AG04450 (cell line): ENCODE measurements at regions of chr12 and their contacts with region 1.

Region 1: DNA sequence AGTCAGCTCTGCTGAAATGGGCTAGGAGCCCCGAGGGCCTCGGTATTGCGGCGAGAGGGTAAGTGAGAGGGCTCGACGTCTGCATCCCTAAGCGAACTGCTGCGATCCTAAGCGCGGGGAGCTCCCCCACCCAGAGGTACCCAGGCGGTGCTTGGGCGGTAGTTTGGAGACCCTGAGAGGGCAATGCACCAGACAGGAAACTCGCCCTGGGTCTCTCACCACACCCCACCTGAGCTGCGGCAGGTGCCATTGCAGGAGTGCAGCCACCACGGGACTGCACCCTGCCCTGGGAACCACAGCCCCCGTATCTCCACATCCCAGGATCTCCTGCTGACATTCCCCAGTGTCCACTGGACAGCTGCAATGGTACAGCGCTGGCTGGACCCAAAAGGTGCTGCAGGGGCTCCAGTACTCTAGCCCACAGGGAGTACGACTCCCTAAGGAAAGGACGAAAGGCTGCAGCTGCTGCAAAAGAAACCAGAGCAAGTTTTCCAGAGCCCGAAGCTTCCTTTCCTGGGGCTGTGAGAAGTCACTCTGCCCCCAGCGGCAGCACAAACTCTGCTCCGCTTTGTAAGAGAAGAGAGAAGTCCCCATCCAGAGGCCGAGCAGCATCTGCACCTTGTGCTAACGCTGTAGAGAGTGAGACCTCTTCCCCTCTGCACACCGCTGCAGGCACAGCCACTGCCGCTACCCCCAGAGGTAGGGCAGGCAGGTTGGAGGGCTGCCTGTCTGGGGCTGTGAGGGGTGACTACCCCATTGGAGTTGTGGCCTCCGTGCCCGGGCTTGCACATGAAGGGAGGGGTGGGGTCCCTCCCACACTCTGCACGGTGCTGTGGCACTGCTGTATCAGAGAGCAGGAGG is 31.1 kb upstream of the MON2 start:
- DNase-seq: peak; percentile 49
- H3K4me3 ChIP-seq: peak overlapping the region; percentile 61
- H3K27ac ChIP-seq: no peak overlapping the region
- H3K27me3 ChIP-seq: peaks cover 26% of the 10 kb centered on the region
- CTCF ChIP-seq: peak; percentile 75

Region 2: DNA sequence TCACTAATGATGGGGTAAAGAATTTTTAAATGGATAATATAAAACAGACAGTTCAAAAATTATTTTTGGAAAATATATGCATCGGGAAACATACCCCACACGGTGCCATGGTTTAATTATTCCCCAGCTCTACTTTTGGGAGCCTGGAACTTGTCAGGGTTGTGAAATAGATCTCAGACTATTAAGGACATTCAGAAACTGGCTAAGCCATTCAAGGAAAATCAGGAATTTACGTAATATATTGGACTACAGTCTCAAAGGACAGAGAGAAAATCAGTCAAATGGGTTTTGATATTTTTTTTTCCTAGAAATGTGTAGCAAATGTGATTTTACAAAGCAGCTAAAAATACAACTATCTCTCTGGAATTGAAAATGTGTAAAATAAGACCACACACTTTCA is 26.5 kb before region 1 on chr12:
- CTCF ChIA-PET with region 1: interaction called, 63 read pairs
- POLR2A ChIA-PET with region 1: no interaction called
- DNase-seq: no peak
- H3K4me3 ChIP-seq: no peak overlapping the region
- H3K27ac ChIP-seq: no peak overlapping the region
- H3K27me3 ChIP-seq: no peaks in the 10 kb centered on the region
- CTCF ChIP-seq: no peak

Region 3: DNA sequence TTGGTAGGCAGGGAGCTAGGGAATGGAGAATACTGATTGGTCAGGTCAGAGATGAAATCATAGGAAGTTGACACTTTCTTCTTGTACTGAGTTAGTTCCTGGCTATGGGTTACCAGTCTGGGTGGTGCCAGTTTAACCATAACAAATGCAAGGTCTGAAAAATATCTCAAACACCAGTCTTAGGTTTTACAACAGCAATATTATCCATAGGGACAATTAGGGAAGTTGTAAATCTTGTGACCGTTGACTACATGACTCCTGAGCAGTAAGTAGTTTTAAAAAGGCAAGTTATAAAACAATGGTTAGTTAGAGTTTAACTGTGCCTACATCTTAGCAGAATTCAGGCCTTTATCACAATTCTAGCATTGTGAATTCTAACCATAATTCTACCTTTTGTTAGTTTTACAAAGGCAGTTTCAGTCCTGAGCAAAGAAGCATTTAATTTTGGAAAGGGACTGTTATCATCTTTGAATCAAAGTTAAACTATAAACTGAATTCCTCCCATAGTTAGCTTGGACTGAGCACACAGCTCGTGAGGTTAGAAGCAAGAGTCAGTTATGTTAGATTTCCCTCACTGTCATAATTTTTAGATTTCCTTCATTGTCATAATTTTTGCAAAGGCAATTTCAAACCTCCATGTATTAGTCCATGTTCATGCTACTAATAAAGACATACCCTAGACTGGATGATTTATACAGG is 11.4 kb after region 1 on chr12:
- CTCF ChIA-PET with region 1: interaction called, 23 read pairs
- POLR2A ChIA-PET with region 1: no interaction called
- DNase-seq: no peak
- H3K4me3 ChIP-seq: no peak overlapping the region
- H3K27ac ChIP-seq: no peak overlapping the region
- H3K27me3 ChIP-seq: peaks cover 2% of the 10 kb centered on the region
- CTCF ChIP-seq: no peak

Region 4: GRCh38 chr12:62537551-62537950 is 102.0 kb after region 1 on chr12:
- CTCF ChIA-PET with region 1: interaction called, 10 read pairs
- POLR2A ChIA-PET with region 1: no interaction called
- DNase-seq: peak; percentile 20
- H3K4me3 ChIP-seq: no peak overlapping the region
- H3K27ac ChIP-seq: no peak overlapping the region
- H3K27me3 ChIP-seq: no peaks in the 10 kb centered on the region
- CTCF ChIP-seq: no peak

Region 5: DNA sequence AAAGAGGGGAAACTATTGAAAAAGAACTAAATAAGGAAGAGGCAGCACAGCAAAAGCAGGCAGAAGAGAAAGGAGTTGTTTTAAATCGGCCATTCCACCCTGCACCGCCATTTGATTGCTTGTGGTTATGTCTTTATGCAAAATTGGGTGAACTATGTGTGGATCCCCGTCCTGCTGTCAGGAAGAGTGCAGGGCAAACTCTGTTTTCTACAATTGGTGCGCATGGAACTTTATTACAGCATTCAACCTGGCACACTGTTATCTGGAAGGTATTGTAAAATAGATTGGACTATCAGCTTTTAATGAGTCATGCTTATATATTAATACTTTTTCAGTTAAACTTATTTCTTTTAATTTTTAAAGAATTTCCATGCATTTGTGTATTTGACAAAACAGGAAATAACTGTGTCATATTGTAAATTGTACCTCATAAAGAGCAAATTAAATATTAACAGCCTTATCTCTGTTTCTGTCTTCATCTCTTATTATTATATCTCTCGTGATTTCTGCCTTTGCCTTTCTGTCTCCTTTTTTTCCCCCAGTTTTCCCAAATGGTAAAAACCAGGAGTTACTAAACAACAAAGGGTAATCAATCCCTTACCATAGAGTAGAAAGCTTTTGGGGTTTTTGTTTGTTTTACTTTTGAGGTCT is 117.5 kb after region 1 on chr12:
- CTCF ChIA-PET with region 1: interaction called, 12 read pairs
- POLR2A ChIA-PET with region 1: no interaction called
- DNase-seq: no peak
- H3K4me3 ChIP-seq: no peak overlapping the region
- H3K27ac ChIP-seq: no peak overlapping the region
- H3K27me3 ChIP-seq: no peaks in the 10 kb centered on the region
- CTCF ChIP-seq: no peak

Region 6: DNA sequence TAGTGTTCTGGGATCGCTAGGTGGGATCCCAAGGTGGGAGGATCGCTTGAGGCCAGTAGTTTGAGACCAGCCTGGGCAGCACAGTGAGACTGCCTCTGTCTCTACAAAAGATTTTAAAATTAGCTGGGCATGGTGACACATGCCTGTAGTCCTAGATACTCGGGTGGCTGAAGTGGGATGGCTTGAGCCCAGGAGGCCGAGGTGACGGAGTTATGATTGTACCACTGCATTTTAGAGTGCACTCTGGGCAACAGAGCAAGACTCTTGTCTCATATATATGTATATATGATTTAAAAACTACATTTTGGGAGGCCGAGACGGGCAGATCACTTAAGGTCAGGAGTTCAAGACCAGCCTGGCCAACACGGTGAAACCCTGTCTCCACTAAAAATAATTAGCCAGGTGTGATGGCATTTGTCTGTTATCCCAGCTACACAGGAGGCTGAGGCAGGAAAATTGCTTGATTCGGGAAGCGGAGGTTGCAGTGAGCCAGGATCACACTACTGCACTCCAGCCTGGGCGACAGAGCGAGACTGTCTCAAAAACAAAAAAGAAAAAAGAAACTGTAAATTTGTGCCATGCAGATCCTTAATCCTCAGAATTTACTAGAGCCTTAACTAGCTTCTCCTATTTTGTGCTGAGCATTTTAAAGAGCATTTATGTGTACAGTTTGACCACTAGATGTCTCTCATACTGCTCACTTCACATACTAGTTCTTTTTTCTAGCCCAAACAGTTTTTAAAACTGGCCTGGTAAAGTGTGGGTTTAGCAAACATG is 145.9 kb after region 1 on chr12:
- CTCF ChIA-PET with region 1: interaction called, 13 read pairs
- POLR2A ChIA-PET with region 1: interaction called, 3 read pairs
- DNase-seq: peak; percentile 20
- H3K4me3 ChIP-seq: no peak overlapping the region
- H3K27ac ChIP-seq: no peak overlapping the region
- H3K27me3 ChIP-seq: no peaks in the 10 kb centered on the region
- CTCF ChIP-seq: peak; percentile 77

Region 7: GRCh38 chr12:62813031-62813829 is 377.7 kb after region 1 on chr12:
- CTCF ChIA-PET with region 1: interaction called, 63 read pairs
- POLR2A ChIA-PET with region 1: no interaction called
- DNase-seq: peak; percentile 38
- H3K4me3 ChIP-seq: peak overlapping the region; percentile 2; the same call in 1 of the 2 replicates
- H3K27ac ChIP-seq: no peak overlapping the region
- H3K27me3 ChIP-seq: peaks cover 5% of the 10 kb centered on the region
- CTCF ChIP-seq: peak; percentile 84